Activated T-helper 2 cell treated with anti-CD3 and anti-CD28 coated beads, Interferon-gamma antibody, Interleukin-2, Interleukin-4, amounts not matched to agents 10 μg/mL and 5 μg/mL and 100 μg/mL, durations not matched to agents 14 hours and 24 hours and 36 hours (primary cell): ENCODE measurements at regions of chr6 and their contacts with region 1.

Region 1: GRCh38 chr6:80004173-80005072 is at the start of gene TTK:
- DNase-seq: peak; percentile 92
- H3K4me3 Mint-ChIP-seq: peak within 1 kb of the TSS; percentile 92
- H3K27ac Mint-ChIP-seq: peak within 1 kb of the TSS; percentile 94
- H3K4me1 Mint-ChIP-seq: peaks cover 42% of the 10 kb centered on the region
- H3K27me3 Mint-ChIP-seq: peaks cover 8% of the 10 kb centered on the region
- total RNA-seq, gene TTK: 25.5 and 26.2 TPM in 2 replicates

Region 2: GRCh38 chr6:79869600-79870084 is 134.8 kb before region 1 on chr6:
- intact Hi-C with region 1: loop called (anchors 5 kb)
- DNase-seq: peak; percentile 74
- H3K4me3 Mint-ChIP-seq: no peak overlapping the region
- H3K27ac Mint-ChIP-seq: peak overlapping the region; percentile 29
- H3K4me1 Mint-ChIP-seq: peaks cover 10% of the 10 kb centered on the region
- H3K27me3 Mint-ChIP-seq: peaks cover 18% of the 10 kb centered on the region

Region 3: GRCh38 chr6:79949233-79949632 is 55.2 kb before region 1 on chr6:
- intact Hi-C with region 1: loop called (anchors 2 kb)
- DNase-seq: peak; percentile 29
- H3K4me3 Mint-ChIP-seq: no peak overlapping the region
- H3K27ac Mint-ChIP-seq: no peak overlapping the region
- H3K4me1 Mint-ChIP-seq: peaks cover 20% of the 10 kb centered on the region
- H3K27me3 Mint-ChIP-seq: peaks cover 43% of the 10 kb centered on the region

Region 4: DNA sequence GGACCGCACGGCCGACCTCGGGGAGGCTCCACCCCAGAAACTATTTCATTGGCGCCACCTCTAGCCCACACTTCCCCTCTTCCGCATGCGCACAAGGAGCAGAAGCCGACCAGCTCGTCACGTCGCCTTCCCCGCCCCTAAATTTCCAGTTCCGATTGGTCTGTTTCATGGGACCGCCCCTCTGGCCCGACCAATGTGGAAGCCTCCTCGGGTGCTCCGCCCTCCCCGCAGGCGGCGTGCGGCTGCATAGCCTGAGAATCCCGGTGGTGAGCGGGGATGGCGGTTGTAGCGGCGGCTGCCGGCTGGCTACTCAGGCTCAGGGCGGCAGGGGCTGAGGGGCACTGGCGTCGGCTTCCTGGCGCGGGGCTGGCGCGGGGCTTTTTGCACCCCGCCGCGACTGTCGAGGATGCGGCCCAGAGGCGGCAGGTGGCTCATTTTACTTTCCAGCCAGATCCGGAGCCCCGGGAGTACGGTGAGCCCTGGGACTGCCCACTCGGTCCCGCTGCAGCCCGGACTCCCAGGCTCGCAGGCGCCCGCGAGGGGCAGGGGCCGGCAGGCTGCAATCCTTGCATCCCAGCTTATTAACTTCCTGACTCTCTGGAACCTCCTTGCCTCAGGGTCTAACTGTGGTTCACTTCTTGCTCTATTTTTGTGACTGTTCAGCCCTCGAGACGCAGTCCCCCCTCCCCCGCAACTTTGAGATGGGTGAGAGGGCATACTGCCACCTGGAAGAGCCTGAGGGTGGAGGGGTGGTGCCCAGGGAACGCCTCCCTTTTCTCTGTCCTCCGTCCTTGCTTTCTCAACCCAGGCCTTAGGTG is 102.2 kb after region 1 on chr6 and contains the start of gene BCKDHB:
- intact Hi-C with region 1: loop called (anchors 1 kb)
- DNase-seq: peak; percentile 98
- H3K4me3 Mint-ChIP-seq: peak within 1 kb of the TSS; percentile 96
- H3K27ac Mint-ChIP-seq: peak within 1 kb of the TSS; percentile 90
- H3K4me1 Mint-ChIP-seq: peaks cover 20% of the 10 kb centered on the region
- H3K27me3 Mint-ChIP-seq: peaks cover 6% of the 10 kb centered on the region
- total RNA-seq, gene BCKDHB: 17.5 and 18.5 TPM in 2 replicates

Region 5: GRCh38 chr6:80163658-80164187 is 159.3 kb after region 1 on chr6:
- intact Hi-C with region 1: loop called (anchors 1 kb)
- DNase-seq: no peak
- H3K4me3 Mint-ChIP-seq: no peak overlapping the region
- H3K27ac Mint-ChIP-seq: no peak overlapping the region
- H3K4me1 Mint-ChIP-seq: peaks cover 7% of the 10 kb centered on the region
- H3K27me3 Mint-ChIP-seq: no peaks in the 10 kb centered on the region

Region 6: DNA sequence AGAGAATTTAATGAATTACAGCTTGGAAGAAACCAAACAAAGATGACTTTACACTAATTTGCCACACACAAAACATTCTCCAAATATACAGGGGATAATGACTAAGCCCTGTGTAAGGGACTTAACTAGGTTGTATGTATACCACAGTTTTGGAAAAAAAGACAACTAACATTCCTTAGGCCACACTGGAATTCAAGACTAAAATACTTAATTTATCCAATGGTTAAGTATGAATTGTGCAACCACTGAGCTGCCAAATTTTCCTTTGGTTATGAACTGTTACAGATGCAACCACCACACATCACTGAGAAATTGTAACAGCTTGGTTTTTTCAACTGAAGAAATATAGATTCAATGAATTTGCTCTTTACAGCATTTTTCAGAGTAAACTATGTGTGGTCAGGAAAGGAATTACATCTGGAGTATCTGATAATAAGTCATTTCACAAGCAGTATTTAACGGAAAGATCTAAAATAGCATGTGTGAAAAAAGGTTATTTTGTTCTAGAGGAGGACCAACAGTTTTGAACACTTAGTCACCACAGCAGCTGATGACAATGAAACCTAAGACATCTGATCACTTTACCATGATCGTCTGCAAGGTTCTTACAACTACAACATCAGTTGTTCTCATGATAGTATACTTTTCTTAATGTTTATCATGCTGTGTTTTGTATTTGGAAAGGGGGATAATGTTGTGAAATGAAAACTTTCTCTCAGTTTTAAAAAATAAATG is 420.8 kb after region 1 on chr6:
- intact Hi-C with region 1: no loop called
- DNase-seq: no peak
- H3K4me3 Mint-ChIP-seq: no peak overlapping the region
- H3K27ac Mint-ChIP-seq: no peak overlapping the region
- H3K4me1 Mint-ChIP-seq: no peaks in the 10 kb centered on the region
- H3K27me3 Mint-ChIP-seq: no peaks in the 10 kb centered on the region